ENCODE measurements at regions of chr22 and their contacts with region 1.

Region 1: DNA sequence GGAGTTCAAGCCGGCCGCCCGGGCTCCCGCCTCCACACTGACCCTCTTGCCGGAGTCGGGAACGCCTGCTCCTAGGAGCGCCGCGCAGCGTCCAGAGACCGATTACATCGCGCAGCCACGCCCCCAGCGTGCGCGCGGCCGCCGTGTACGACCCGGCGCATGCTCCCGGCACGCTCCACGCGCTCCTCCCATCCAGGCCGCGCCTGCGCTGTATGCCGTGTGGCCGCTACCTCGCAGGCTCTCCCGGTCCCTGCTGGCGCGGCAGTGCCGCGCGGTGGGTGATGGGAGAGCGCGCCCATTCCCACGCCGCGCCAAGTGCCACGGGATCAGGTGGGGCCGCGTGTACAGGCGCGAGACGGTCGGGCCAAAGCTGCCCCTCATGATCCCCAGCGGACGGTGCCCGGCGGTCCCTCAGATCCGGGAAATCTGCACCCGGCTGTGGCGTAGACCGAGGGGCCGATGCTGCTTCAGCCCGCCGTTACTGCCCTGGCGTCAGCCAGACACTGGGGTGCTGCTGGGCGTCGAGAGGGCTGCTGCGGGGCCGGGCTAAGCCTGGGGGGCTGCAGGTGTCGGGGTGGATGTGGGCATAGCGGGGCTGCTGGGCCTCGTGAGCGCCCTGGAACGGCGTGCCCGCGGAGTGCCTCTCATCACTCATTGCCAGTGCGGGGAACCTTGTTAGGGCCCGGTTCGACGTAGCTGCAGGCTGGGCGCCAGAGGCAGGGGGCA is at the starts of genes GNB1L and RTL10:
- DNase-seq: peak; percentile 97
- ATAC-seq: peak; percentile 93
- H3K4me3 ChIP-seq: peak within 1 kb of the TSS; percentile 70 to 97 (median 88)
- H3K4me3 Mint-ChIP-seq: peak within 1 kb of the TSS; percentile 95
- H3K27ac ChIP-seq: peak within 1 kb of the TSS; percentile 85 to 88
- H3K27ac Mint-ChIP-seq: peak within 1 kb of the TSS; percentile 97
- H3K4me1 ChIP-seq: peaks cover 21 to 26% of the 10 kb centered on the region in 2 donors
- H3K4me1 Mint-ChIP-seq: peaks cover 43% of the 10 kb centered on the region
- H3K27me3 ChIP-seq: no peaks in the 10 kb centered on the region
- H3K27me3 Mint-ChIP-seq: no peaks in the 10 kb centered on the region
- CTCF ChIP-seq: no peak
- total RNA-seq, gene GNB1L: 6.6 and 7.2 TPM in 2 replicates
- total RNA-seq, gene RTL10: 14.8 and 15.2 TPM in 2 replicates

Region 2: GRCh38 chr22:19756288-19757128 is 98.4 kb before region 1 on chr22:
- CTCF ChIA-PET with region 1: interaction called, 5 read pairs
- POLR2A ChIA-PET with region 1: no interaction called
- intact Hi-C with region 1: loop called (anchors 1 kb)
- DNase-seq: peak; percentile 72
- ATAC-seq: peak; percentile 53
- H3K4me3 ChIP-seq: peak overlapping the region in 4 of 5 experiments; percentile 31 to 51 (median 41)
- H3K4me3 Mint-ChIP-seq: peak overlapping the region; percentile 83
- H3K27ac ChIP-seq: no peak overlapping the region
- H3K27ac Mint-ChIP-seq: no peak overlapping the region
- H3K4me1 ChIP-seq: peaks cover 34 to 46% of the 10 kb centered on the region in 2 donors
- H3K4me1 Mint-ChIP-seq: peaks cover 33% of the 10 kb centered on the region
- H3K27me3 ChIP-seq: peaks cover 0 to 78% (median 40%) of the 10 kb centered on the region in 4 experiments
- H3K27me3 Mint-ChIP-seq: peaks cover 50% of the 10 kb centered on the region
- CTCF ChIP-seq: peak; percentile 51

Region 3: DNA sequence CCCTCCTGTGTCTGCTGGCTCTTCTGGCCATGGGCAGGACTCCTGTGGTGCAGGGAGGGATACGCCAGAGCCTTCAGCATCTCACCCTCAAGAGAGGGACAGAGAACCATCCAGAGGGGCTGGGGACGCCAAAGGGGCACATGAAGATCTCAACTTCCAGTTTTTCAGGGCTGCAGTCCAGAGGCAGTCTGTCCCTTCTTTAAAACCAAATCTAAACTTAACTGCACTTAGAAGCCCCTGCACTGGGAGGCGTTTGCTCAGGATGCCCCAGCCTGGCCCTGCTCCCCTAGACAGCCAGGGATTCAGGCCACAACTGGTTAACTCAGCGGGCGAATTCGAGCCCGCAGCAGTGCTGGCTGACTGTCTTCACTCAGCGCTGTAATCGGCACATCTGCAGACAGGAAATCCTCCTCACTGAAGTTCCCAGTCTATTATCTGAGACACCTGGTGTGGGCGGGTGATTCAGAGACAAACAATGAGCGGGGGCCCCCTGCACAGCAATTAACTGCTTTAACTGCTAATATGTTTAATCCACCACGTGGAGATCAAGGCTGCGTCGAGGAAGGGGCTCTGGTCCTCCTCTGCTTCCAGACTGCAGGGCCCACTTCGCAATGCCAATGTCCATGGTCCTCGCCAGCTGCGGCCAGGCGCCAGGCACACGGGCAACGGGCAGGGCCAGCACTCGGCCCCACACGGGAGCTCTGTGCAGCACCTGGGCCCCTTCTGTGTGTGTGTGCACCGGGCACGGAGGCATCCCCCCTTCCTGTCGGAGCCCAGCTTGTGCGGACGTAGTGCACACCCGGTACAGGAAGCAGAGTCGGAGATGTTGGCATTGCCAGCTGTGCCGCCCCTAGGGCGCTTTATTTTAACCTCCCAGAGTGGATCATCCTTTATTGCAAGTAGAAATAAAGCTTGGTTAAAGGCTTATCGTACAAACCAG is 36.6 kb after region 1 on chr22:
- CTCF ChIA-PET with region 1: interaction called, 3 read pairs
- POLR2A ChIA-PET with region 1: interaction called, 3 read pairs
- intact Hi-C with region 1: loop called (anchors 1 kb)
- DNase-seq: peak; percentile 58
- ATAC-seq: peak; percentile 74
- H3K4me3 ChIP-seq: peak overlapping the region in 4 of 5 experiments; percentile 33 to 58 (median 40)
- H3K4me3 Mint-ChIP-seq: peak overlapping the region; percentile 82
- H3K27ac ChIP-seq: peak overlapping the region; percentile 28 to 35
- H3K27ac Mint-ChIP-seq: peak overlapping the region; percentile 87
- H3K4me1 ChIP-seq: peaks cover 27 to 30% of the 10 kb centered on the region in 2 donors
- H3K4me1 Mint-ChIP-seq: peaks cover 28% of the 10 kb centered on the region
- H3K27me3 ChIP-seq: no peaks in the 10 kb centered on the region
- H3K27me3 Mint-ChIP-seq: no peaks in the 10 kb centered on the region
- CTCF ChIP-seq: no peak

Region 4: DNA sequence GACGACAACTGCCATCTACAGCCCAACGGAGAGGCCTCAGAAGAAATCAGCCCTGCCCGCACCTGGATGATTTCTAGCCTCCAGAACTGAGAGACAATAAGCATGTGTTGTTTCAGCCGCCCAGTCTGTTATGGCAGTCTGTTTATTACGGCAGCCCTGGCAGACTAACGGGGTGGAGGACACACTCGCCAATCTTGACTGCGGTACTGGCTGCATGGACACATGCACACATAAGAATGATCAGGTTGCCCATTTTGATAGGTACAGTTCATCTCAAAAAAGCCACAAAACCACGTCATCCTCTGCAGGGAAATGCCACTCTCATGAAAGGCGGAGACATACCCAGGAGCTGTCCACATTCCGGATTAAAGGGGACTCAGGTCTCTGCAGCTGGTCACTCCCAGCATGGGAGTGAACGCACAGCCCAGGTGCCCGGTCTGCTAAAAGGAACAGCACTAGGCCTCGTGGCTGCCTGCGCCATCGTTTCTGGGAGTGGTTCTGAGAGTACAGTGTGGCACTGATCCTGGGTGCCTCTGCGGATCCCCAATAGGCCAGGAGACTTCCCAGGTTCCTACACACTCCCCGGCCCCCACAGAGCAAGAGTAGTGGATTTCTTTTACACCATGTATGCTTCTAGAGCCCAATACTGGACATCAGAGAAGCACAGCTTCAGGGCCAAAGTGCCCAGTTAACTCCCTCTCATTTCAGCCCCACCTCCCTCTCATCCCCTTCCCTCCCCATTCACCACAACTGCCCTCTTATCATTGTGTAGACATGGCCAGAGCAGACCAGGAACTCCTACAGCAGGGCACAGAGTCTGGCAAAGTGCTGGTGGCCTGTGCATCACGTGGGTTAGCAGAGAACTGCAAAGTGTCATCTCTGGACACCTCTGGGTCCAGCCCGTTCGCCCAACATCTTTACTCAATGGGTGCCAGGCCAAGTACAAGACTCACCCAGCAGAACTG is 74.9 kb after region 1 on chr22:
- CTCF ChIA-PET with region 1: no interaction called
- POLR2A ChIA-PET with region 1: no interaction called
- intact Hi-C with region 1: no loop called
- DNase-seq: no peak
- ATAC-seq: no peak
- H3K4me3 ChIP-seq: no peak overlapping the region
- H3K4me3 Mint-ChIP-seq: no peak overlapping the region
- H3K27ac ChIP-seq: no peak overlapping the region
- H3K27ac Mint-ChIP-seq: no peak overlapping the region
- H3K4me1 ChIP-seq: no peaks in the 10 kb centered on the region
- H3K4me1 Mint-ChIP-seq: no peaks in the 10 kb centered on the region
- H3K27me3 ChIP-seq: no peaks in the 10 kb centered on the region
- H3K27me3 Mint-ChIP-seq: no peaks in the 10 kb centered on the region
- CTCF ChIP-seq: no peak

Region 5: DNA sequence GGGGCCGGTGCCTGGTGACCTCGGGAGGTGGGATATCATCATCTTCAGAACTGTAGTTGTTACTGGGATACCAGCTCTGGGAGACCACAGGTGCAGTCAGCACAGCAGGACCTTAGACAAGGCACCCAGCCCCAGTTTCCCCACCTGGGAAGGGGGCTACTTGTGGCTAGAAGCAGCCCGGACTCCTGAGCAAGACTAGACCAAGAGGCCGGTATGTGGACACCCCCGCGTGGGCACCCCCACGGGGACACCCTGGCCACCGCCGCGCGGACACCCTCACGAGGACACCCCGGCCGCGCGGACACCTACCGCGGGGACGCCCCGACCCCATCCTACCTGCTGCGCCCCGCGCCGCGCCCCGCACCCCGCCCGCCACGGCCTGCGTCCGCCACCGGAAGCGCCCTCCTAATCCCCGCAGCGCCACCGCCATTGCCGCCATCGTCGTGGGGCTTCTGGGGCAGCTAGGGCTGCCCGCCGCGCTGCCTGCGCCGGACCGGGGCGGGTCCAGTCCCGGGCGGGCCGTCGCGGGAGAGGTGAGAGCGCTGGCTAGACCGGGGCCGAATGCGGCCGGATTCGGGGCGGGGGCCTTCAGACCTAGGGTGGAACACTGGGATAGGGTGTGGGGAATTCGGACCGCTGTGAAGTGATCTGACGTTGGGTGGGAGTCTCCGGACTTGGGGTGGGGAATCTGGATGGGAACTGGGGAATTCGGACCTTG is 86.6 kb after region 1 on chr22 and contains the starts of genes COMT and TXNRD2:
- CTCF ChIA-PET with region 1: no interaction called
- POLR2A ChIA-PET with region 1: no interaction called
- intact Hi-C with region 1: loop called (anchors 2 kb)
- DNase-seq: peak; percentile 72
- ATAC-seq: peak; percentile 92
- H3K4me3 ChIP-seq: peak within 1 kb of the TSS; percentile 76 to 99 (median 83)
- H3K4me3 Mint-ChIP-seq: peak within 1 kb of the TSS; percentile 94
- H3K27ac ChIP-seq: peak within 1 kb of the TSS; percentile 62 to 85
- H3K27ac Mint-ChIP-seq: peak within 1 kb of the TSS; percentile 91
- H3K4me1 ChIP-seq: peaks cover 24 to 34% of the 10 kb centered on the region in 2 donors
- H3K4me1 Mint-ChIP-seq: peaks cover 40% of the 10 kb centered on the region
- H3K27me3 ChIP-seq: no peaks in the 10 kb centered on the region
- H3K27me3 Mint-ChIP-seq: no peaks in the 10 kb centered on the region
- CTCF ChIP-seq: no peak
- total RNA-seq, gene COMT: 32.6 and 36.1 TPM in 2 replicates
- total RNA-seq, gene TXNRD2: 36.2 and 39.0 TPM in 2 replicates

Region 6: GRCh38 chr22:20079745-20080444 is 225.0 kb after region 1 on chr22 and contains the start of gene DGCR8:
- CTCF ChIA-PET with region 1: no interaction called
- POLR2A ChIA-PET with region 1: no interaction called
- intact Hi-C with region 1: loop called (anchors 10 kb)
- DNase-seq: peak; percentile 89
- ATAC-seq: peak; percentile 95
- H3K4me3 ChIP-seq: peak within 1 kb of the TSS; percentile 71 to 95 (median 86)
- H3K4me3 Mint-ChIP-seq: peak within 1 kb of the TSS; percentile 95
- H3K27ac ChIP-seq: peak within 1 kb of the TSS; percentile 29 to 70
- H3K27ac Mint-ChIP-seq: peak within 1 kb of the TSS; percentile 89
- H3K4me1 ChIP-seq: peaks cover 9 to 21% of the 10 kb centered on the region in 2 donors
- H3K4me1 Mint-ChIP-seq: peaks cover 37% of the 10 kb centered on the region
- H3K27me3 ChIP-seq: no peaks in the 10 kb centered on the region
- H3K27me3 Mint-ChIP-seq: no peaks in the 10 kb centered on the region
- CTCF ChIP-seq: no peak
- total RNA-seq, gene DGCR8: 43.2 and 46.6 TPM in 2 replicates

Measured in B cell (primary cell).